Activated CD4-positive, alpha-beta memory T cell treated with anti-CD3 and anti-CD28 coated beads for 36 hours (primary cell): ENCODE measurements at regions of chr2 and their contacts with region 1.

Region 1: DNA sequence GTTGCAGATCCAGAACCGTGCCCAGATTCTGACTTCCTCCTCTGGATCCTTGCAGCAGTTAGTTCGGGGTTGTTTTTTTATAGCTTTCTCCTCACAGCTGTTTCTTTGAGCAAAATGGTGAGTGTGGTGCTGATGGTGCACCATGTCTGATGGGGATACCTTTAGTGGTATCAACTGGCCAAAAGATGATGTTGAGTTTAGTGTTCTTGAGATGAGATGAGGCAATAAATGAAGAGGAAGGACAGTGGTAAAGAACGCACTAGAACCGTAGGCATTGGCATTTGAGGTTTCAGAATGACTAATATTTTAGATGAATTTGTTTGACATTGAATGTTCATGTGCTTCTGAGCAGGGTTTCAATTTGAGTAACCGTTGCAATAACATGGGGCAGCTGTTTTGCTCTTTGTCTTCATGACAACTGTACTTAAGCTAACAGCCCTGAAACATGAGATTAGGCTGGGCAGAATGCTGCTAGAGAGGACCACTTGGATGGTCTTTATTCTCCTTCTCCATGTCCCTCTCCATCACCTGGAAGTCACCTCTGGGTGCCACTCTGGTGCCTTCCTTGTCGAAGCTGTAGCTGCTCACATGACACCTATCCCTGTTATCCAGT is 3.9 kb downstream of the CTLA4 start:
- DNase-seq: peak; percentile 61
- H3K4me3 Mint-ChIP-seq: peak overlapping the region; percentile 92
- H3K27ac Mint-ChIP-seq: peak overlapping the region; percentile 98
- H3K4me1 Mint-ChIP-seq: peaks cover 74% of the 10 kb centered on the region
- H3K27me3 Mint-ChIP-seq: no peaks in the 10 kb centered on the region

Region 2: GRCh38 chr2:203578759-203579643 is 292.5 kb before region 1 on chr2:
- CTCF ChIA-PET with region 1: no interaction called
- POLR2A ChIA-PET with region 1: no interaction called
- intact Hi-C with region 1: loop called (anchors 1 kb)
- DNase-seq: peak; percentile 72
- H3K4me3 Mint-ChIP-seq: no peak overlapping the region
- H3K27ac Mint-ChIP-seq: peak overlapping the region; percentile 16
- H3K4me1 Mint-ChIP-seq: peaks cover 29% of the 10 kb centered on the region
- H3K27me3 Mint-ChIP-seq: peaks cover 12% of the 10 kb centered on the region

Region 3: GRCh38 chr2:203730076-203730729 is 141.3 kb before region 1 on chr2:
- CTCF ChIA-PET with region 1: no interaction called
- POLR2A ChIA-PET with region 1: interaction called, 17 read pairs
- intact Hi-C with region 1: no loop called
- DNase-seq: no peak
- H3K4me3 Mint-ChIP-seq: peak overlapping the region; percentile 47
- H3K27ac Mint-ChIP-seq: peak overlapping the region; percentile 99
- H3K4me1 Mint-ChIP-seq: peaks cover 93% of the 10 kb centered on the region
- H3K27me3 Mint-ChIP-seq: no peaks in the 10 kb centered on the region

Region 4: GRCh38 chr2:203820969-203821368 is 50.5 kb before region 1 on chr2:
- CTCF ChIA-PET with region 1: interaction called, 20 read pairs
- POLR2A ChIA-PET with region 1: interaction called, 6 read pairs
- intact Hi-C with region 1: loop called (anchors 1 kb)
- DNase-seq: no peak
- H3K4me3 Mint-ChIP-seq: no peak overlapping the region
- H3K27ac Mint-ChIP-seq: no peak overlapping the region
- H3K4me1 Mint-ChIP-seq: peaks cover 36% of the 10 kb centered on the region
- H3K27me3 Mint-ChIP-seq: no peaks in the 10 kb centered on the region

Region 5: GRCh38 chr2:203887677-203888076 is 16.2 kb after region 1 on chr2:
- CTCF ChIA-PET with region 1: interaction called, 23 read pairs
- POLR2A ChIA-PET with region 1: interaction called, 190 read pairs
- intact Hi-C with region 1: loop called (anchors 1 kb)
- DNase-seq: no peak
- H3K4me3 Mint-ChIP-seq: no peak overlapping the region
- H3K27ac Mint-ChIP-seq: peak overlapping the region; percentile 90
- H3K4me1 Mint-ChIP-seq: peaks cover 84% of the 10 kb centered on the region
- H3K27me3 Mint-ChIP-seq: peaks cover 2% of the 10 kb centered on the region

Region 6: DNA sequence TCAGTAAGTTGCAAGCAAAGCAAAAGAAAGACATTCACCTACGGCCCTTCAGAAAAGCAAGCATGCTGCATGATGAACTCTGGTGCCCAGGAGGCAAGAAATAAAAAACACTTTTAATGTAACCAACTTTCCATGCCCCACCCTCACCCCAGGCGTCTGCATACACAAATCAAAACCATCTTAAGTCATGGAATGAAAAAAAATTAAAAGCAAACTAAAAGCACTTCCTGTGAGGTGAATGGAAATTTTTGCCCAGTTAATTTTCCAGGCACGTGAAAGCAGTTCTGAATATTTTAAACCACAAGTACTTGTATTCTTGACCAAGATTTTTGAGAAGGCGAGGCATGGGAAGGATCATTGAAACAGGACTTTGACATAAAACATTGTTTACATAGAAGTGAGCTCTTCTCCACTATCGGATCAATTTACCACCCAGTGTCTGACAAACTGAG is 62.6 kb after region 1 on chr2:
- CTCF ChIA-PET with region 1: interaction called, 3 read pairs
- POLR2A ChIA-PET with region 1: interaction called, 188 read pairs
- intact Hi-C with region 1: loop called (anchors 1 kb)
- DNase-seq: peak; percentile 76
- H3K4me3 Mint-ChIP-seq: peak overlapping the region; percentile 74
- H3K27ac Mint-ChIP-seq: peak overlapping the region; percentile 94
- H3K4me1 Mint-ChIP-seq: peaks cover 59% of the 10 kb centered on the region
- H3K27me3 Mint-ChIP-seq: no peaks in the 10 kb centered on the region

Region 7: DNA sequence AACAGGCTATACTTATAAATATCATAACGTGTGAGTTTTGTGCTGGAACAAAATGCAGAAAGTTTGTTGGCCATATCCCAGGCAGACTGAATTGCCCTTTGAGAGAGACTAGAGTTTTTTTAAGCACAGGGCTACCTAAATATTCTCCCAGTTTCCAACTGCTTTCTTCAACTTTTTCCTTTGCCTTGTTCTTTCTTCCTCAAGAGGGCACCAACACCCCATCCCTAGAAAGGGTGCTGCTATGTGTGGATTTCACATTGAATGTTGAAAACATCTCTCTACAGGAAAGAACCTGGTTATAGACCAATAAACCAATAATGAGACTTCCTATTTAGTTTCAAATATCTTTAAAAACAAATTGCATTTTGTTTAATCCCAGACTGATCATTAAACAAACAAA is 153.0 kb after region 1 on chr2:
- CTCF ChIA-PET with region 1: no interaction called
- POLR2A ChIA-PET with region 1: interaction called, 3 read pairs
- intact Hi-C with region 1: loop called (anchors 5 kb)
- DNase-seq: peak; percentile 47
- H3K4me3 Mint-ChIP-seq: no peak overlapping the region
- H3K27ac Mint-ChIP-seq: no peak overlapping the region
- H3K4me1 Mint-ChIP-seq: peaks cover 64% of the 10 kb centered on the region
- H3K27me3 Mint-ChIP-seq: no peaks in the 10 kb centered on the region